ENCODE measurements at regions of chr14 and their contacts with region 1.

Region 1: DNA sequence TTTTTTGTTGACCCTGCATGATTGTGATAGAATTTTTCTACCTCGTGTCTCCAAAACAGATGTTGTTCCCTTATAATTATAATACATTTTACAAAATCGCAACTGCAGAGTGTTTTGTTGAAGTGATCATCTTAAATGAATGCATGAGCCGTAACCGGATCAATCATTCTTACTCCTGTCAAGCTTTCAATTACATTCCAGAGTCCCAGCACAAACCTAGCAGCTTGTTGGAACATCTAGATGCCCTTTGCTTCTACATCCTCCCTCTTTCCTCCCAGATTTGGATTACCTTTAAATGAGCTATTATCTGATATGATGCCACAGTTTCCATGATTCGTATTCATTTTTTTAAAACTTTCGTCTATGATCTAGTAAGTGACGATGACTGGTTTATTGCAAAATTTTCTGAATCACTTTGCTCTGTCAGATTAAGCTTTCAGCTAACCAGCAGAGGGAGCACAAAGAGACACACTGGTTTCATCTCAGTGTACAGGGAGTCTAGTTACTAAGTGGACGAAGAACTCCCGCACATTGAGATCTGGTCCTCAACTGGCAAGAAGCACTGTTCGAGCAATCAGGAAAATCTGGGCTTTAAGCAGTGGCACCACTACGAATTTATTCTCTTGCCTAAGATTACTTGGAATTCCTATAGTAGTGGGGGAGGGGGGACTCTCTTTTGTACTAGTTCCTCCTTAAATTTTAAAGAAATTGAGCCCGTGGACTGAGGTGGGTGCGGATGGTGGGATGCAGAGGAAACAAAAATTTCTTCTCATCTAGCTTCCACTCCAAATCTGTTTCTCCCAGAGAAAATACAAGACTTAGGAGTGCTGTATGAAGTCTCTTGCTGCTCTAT is 40.9 kb downstream of the TSHR start:
- DNase-seq: peak; percentile 81
- H3K4me3 ChIP-seq: no peak overlapping the region
- H3K27ac ChIP-seq: no peak overlapping the region
- H3K4me1 ChIP-seq: no peaks in the 10 kb centered on the region
- H3K27me3 ChIP-seq: peaks cover 5% of the 10 kb centered on the region
- CTCF ChIP-seq: peak; percentile 67 to 83

Region 2: GRCh38 chr14:80906946-80907345 is 89.3 kb before region 1 on chr14:
- CTCF ChIA-PET with region 1: no interaction called
- dilution Hi-C with region 1: no loop called
- in situ Hi-C with region 1: no loop called
- intact Hi-C with region 1: no loop called
- DNase-seq: no peak
- H3K4me3 ChIP-seq: no peak overlapping the region
- H3K27ac ChIP-seq: no peak overlapping the region
- H3K4me1 ChIP-seq: no peaks in the 10 kb centered on the region
- H3K27me3 ChIP-seq: no peaks in the 10 kb centered on the region
- CTCF ChIP-seq: no peak

Region 3: DNA sequence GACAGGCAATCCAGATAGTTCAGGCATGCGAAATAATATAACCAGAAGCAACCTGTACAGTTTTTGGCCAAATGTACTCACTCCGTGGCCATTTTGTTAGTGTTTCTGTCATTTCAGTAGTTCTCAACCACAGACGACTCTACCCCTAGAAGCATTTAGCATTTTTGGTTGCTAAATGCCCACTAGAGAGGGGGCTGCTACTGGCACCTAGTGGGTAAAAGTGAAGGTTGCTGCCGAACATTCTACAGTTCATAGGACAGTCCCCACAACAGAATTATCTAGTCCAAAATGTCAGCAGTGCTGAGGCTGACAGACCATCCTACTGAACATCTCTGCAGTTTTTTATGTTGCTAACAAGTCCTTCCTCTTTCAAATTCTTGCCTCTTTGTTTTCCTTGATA is 66.5 kb after region 1 on chr14:
- CTCF ChIA-PET with region 1: no interaction called
- dilution Hi-C with region 1: no loop called
- in situ Hi-C with region 1: no loop called
- intact Hi-C with region 1: loop called (anchors 2 kb)
- DNase-seq: peak; percentile 1
- H3K4me3 ChIP-seq: no peak overlapping the region
- H3K27ac ChIP-seq: no peak overlapping the region
- H3K4me1 ChIP-seq: no peaks in the 10 kb centered on the region
- H3K27me3 ChIP-seq: no peaks in the 10 kb centered on the region
- CTCF ChIP-seq: peak; percentile 13 to 32

Region 4: GRCh38 chr14:81164167-81164774 is 168.0 kb after region 1 on chr14:
- CTCF ChIA-PET with region 1: no interaction called
- dilution Hi-C with region 1: no loop called
- in situ Hi-C with region 1: loop called (anchors 10 to 25 kb)
- intact Hi-C with region 1: loop called (anchors 1 kb)
- DNase-seq: peak; percentile 85
- H3K4me3 ChIP-seq: no peak overlapping the region
- H3K27ac ChIP-seq: no peak overlapping the region
- H3K4me1 ChIP-seq: no peaks in the 10 kb centered on the region
- H3K27me3 ChIP-seq: no peaks in the 10 kb centered on the region
- CTCF ChIP-seq: peak; percentile 91 to 95

Region 5: GRCh38 chr14:81211844-81212243 is 215.6 kb after region 1 on chr14:
- CTCF ChIA-PET with region 1: no interaction called
- dilution Hi-C with region 1: no loop called
- in situ Hi-C with region 1: no loop called
- intact Hi-C with region 1: loop called (anchors 1 kb)
- DNase-seq: no peak
- H3K4me3 ChIP-seq: no peak overlapping the region
- H3K27ac ChIP-seq: no peak overlapping the region
- H3K4me1 ChIP-seq: no peaks in the 10 kb centered on the region
- H3K27me3 ChIP-seq: no peaks in the 10 kb centered on the region
- CTCF ChIP-seq: peak; percentile 16 to 48

Measured in mammary epithelial cell (primary cell).